MCF 10A (cell line): ENCODE measurements at regions of chr20 and their contacts with region 1.

Region 1: DNA sequence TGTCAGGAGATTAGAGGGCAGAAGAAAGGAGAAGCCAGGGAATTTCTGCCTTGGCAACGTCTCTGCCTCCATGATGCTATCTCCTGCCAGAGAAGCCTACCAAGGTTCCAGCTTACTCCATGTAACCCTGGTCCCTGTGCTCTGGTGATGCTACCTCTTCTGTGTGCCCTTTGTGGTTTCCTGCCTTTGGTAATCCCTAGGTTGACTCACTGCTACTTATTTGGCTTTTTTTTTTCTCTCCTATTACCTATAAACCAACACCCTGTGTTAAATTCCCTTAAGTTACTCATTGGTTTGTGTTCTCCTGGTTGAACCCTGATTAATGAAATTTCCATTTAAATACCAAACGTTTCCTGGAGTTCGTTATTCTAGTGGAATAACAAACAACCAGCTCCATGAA is 527.8 kb upstream of the FLRT3 start:
- DNase-seq: peak; percentile 72
- H3K4me3 Mint-ChIP-seq: no peak overlapping the region
- H3K27ac Mint-ChIP-seq: peak overlapping the region; percentile 42
- H3K4me1 Mint-ChIP-seq: peaks cover 13% of the 10 kb centered on the region
- H3K27me3 Mint-ChIP-seq: no peaks in the 10 kb centered on the region
- CTCF ChIP-seq: no peak

Region 2: GRCh38 chr20:14853079-14853478 is 12.1 kb before region 1 on chr20:
- CTCF ChIA-PET with region 1: no interaction called
- POLR2A ChIA-PET with region 1: interaction called, 10 read pairs
- intact Hi-C with region 1: no loop called
- DNase-seq: no peak
- H3K4me3 Mint-ChIP-seq: no peak overlapping the region
- H3K27ac Mint-ChIP-seq: no peak overlapping the region
- H3K4me1 Mint-ChIP-seq: peaks cover 5% of the 10 kb centered on the region
- H3K27me3 Mint-ChIP-seq: no peaks in the 10 kb centered on the region
- CTCF ChIP-seq: no peak

Region 3: DNA sequence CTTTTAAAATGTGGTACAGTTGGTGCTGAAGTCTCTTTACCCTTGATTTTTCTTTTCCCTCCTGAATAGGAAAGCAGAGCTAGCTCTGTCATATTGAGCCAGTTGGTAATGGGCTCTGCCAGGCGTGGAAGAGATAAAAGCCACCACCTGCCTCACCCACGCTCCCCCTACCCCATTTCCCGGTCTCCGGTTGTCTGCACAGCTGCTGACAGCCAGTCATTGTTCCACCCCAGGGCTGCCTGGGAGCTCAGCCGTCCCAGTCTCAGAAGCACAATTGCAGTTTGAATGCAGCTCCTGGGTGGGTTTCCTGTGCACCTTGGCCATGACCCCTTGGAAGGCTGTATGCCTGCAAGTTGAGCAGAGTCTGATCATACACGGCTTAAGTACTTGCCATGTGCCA is 147.4 kb after region 1 on chr20:
- CTCF ChIA-PET with region 1: no interaction called
- POLR2A ChIA-PET with region 1: no interaction called
- intact Hi-C with region 1: no loop called
- DNase-seq: no peak
- H3K4me3 Mint-ChIP-seq: no peak overlapping the region
- H3K27ac Mint-ChIP-seq: no peak overlapping the region
- H3K4me1 Mint-ChIP-seq: no peaks in the 10 kb centered on the region
- H3K27me3 Mint-ChIP-seq: no peaks in the 10 kb centered on the region
- CTCF ChIP-seq: no peak